ENCODE measurements at regions of chr5 and their contacts with region 1.

Region 1: GRCh38 chr5:138223532-138223931 is 10.4 kb upstream of the CDC23 start:
- H3K4me3 Mint-ChIP-seq: no peak overlapping the region
- H3K27ac Mint-ChIP-seq: no peak overlapping the region
- H3K4me1 Mint-ChIP-seq: peaks cover 13% of the 10 kb centered on the region
- H3K27me3 Mint-ChIP-seq: peaks cover 1% of the 10 kb centered on the region

Region 2: GRCh38 chr5:137888857-137889759 is 334.4 kb before region 1 on chr5 and contains the start of gene PKD2L2:
- intact Hi-C with region 1: no loop called
- H3K4me3 Mint-ChIP-seq: peak within 1 kb of the TSS; percentile 81
- H3K27ac Mint-ChIP-seq: peak within 1 kb of the TSS; percentile 88
- H3K4me1 Mint-ChIP-seq: peaks cover 20% of the 10 kb centered on the region
- H3K27me3 Mint-ChIP-seq: no peaks in the 10 kb centered on the region

Region 3: DNA sequence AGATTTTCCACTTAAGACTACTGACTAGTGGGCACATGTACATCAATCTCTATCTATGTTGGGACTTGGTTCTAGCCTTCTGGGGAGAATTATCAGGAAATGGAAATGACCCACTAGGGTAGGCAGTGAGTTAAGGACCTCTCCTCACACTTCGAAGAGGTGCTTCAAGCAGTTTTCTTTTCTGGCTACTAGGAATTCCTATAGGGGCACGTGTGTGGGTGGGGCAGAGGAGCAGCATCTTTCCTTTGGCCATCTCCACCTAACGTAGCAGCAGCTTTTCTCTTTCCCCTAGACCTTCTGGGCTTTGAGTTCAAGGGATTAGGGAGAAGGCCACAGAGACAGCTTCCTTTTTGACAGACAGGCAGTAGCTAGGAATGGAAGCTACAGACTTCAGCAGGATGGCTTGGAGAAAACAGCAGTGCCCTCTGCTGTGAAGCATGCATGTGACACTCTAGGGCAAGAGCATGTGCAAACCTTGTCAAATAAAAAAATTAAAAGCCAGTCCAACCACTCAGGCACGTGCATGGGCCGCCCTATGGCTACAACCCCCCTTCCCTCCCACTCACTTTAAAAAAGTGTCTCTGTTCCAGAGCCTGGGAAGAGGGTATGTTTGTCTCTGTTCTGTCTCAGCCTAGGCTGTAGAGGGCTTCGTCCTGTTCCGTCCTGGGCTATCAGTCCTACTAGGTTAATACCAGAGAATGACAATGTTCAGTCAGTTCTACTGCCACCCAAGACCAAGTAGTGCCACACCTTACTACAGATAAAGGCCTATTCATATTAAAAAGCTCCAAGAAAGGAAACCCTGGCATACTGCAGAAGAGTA is 59.6 kb after region 1 on chr5:
- intact Hi-C with region 1: loop called (anchors 5 kb)
- H3K4me3 Mint-ChIP-seq: no peak overlapping the region
- H3K27ac Mint-ChIP-seq: no peak overlapping the region
- H3K4me1 Mint-ChIP-seq: peaks cover 9% of the 10 kb centered on the region
- H3K27me3 Mint-ChIP-seq: no peaks in the 10 kb centered on the region

Region 4: DNA sequence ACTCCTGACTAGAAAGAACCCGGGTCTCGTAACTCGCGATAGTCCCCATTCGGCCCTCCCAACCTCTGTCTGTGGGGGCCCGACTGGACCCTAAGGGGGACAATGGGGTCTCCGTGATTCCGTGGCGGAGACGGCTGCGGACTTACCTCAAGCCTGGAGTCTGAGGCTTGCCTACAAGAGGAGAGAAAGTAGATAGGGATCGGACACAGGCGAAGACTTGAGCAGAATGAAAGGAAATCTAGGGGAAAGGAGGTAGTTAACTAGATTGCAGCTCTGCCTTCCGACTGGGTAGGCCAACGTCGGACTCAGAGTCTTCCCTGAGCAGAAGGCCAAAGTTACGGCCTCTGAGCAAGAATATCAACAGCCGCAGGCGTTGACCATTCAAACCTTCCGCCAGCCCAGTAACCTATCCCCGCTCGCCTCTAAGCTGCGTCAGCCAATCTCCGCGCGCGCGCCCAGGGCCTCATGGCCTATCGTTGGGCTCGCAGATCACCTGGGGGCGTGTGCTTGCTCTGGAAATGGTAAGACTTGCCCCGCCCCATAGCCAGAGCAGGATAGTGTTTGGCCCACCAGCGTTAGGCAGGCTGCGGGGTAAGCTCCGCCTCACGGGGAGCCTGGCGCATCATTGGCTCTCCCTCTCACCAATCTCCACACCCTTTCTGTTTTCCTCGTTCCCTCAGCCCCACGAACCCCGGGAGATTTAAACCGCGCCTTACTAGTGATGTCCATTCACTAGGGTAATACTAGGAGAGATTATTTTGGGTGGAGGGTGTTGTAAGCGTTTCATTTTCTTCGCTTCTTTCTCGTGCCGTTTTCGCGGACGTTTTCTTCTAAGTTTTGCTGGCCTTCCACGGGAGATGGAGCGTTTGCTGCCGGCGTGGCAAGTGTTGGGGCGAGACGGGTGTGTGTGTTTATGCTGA is 108.2 kb after region 1 on chr5 and contains the start of gene CDC25C:
- intact Hi-C with region 1: loop called (anchors 5 kb)
- H3K4me3 Mint-ChIP-seq: peak within 1 kb of the TSS; percentile 80
- H3K27ac Mint-ChIP-seq: peak within 1 kb of the TSS; percentile 57
- H3K4me1 Mint-ChIP-seq: peaks cover 27% of the 10 kb centered on the region
- H3K27me3 Mint-ChIP-seq: no peaks in the 10 kb centered on the region

Region 5: GRCh38 chr5:138408023-138408422 is 184.5 kb after region 1 on chr5:
- intact Hi-C with region 1: loop called (anchors 2 kb)
- H3K4me3 Mint-ChIP-seq: no peak overlapping the region
- H3K27ac Mint-ChIP-seq: no peak overlapping the region
- H3K4me1 Mint-ChIP-seq: no peaks in the 10 kb centered on the region
- H3K27me3 Mint-ChIP-seq: no peaks in the 10 kb centered on the region